Tibial artery (tissue), 4 donors: ENCODE measurements at regions of chr7 and their contacts with region 1.

Region 1: DNA sequence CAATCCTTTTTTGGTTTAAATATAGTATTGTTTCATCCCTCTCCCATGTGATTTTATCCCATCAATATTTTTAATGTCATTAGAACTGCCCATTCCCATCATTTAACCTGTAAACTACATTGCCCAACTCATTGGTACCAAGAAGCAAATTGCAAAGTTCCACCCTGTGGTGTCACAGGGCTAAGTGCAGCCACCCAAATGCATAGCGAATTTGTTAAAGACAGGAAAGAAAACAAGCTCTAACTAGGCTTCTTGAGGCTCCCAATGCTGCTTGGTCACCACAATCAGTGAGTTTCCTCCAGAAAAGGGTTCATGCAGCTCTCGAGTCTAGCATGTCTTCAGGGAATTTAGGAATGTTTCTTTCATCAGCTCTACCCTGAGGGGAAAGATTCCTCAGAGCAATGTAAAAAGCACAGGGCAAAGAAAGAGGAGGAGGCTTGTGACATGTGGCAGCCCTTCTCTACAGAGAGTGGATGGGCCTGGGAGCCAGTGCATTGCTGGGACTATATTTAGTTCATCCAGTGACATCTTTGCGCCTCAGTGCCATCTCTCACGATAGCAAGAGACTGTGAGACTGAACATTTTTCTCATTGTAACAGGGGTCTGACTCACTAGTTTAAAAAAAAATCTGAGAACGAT is 58.1 kb downstream of the CAV1 start:
- DNase-seq: peak; percentile 42 to 73
- H3K4me3 ChIP-seq: peak overlapping the region; percentile 0 to 20
- H3K27ac ChIP-seq: peak overlapping the region; percentile 69 to 73
- H3K4me1 ChIP-seq: peaks cover 0 to 43% (median 20%) of the 10 kb centered on the region in 4 donors
- H3K27me3 ChIP-seq: no peaks in the 10 kb centered on the region
- CTCF ChIP-seq: no peak

Region 2: GRCh38 chr7:116150588-116150987 is 432.3 kb before region 1 on chr7:
- intact Hi-C with region 1: no loop called
- DNase-seq: no peak
- H3K4me3 ChIP-seq: no peak overlapping the region
- H3K27ac ChIP-seq: no peak overlapping the region
- H3K4me1 ChIP-seq: no peaks in the 10 kb centered on the region
- H3K27me3 ChIP-seq: no peaks in the 10 kb centered on the region
- CTCF ChIP-seq: no peak

Region 3: DNA sequence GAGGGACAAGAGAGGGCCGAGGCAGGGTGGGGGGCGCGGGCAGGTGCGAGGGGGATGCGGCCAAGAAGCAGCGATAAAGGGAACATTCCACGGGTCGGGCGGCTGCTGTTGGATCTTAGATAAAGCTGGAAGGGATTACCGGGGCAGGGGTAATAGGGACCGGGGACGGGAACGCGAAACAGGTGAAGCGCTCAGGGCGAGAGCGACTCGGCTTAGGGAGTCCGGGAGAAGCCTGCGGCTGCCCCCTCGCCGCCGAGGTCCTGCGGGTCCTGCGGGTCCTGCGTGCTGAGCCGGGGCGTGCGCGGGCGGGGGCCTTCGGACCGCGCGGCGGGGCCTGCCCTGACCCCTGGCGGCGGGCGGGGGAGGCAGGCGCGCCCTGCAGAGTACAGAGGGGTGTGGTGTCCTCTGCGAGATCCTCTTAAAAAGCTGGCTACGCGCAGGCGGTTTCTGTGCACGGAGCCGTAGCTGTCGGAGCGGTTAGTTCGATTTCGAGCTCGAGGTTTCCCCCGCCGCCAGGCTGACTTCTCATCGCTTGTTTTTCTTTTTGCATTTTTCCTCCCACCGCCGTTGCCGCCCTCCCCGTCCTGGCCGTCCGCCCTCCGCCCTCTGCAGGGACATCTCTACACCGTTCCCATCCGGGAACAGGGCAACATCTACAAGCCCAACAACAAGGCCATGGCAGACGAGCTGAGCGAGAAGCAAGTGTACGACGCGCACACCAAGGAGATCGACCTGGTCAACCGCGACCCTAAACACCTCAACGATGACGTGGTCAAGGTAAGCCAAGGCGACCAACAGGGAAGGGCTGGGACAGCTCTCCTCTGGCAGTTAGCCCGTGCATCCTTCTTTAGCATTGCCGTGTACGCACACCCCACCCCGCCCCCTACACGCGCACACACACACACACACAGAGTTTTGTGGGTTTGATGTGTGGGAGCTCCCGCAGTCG is 56.7 kb before region 1 on chr7:
- intact Hi-C with region 1: loop called (anchors 5 kb)
- DNase-seq: peak; percentile 78 to 92
- H3K4me3 ChIP-seq: peak overlapping the region; percentile 76 to 90
- H3K27ac ChIP-seq: peak overlapping the region; percentile 93 to 99
- H3K4me1 ChIP-seq: peaks cover 0 to 52% (median 11%) of the 10 kb centered on the region in 4 donors
- H3K27me3 ChIP-seq: no peaks in the 10 kb centered on the region
- CTCF ChIP-seq: peak; percentile 83 to 90

Region 4: GRCh38 chr7:116665332-116665996 is 82.5 kb after region 1 on chr7:
- intact Hi-C with region 1: no loop called
- DNase-seq: no peak
- H3K4me3 ChIP-seq: no peak overlapping the region
- H3K27ac ChIP-seq: no peak overlapping the region
- H3K4me1 ChIP-seq: no peaks in the 10 kb centered on the region
- H3K27me3 ChIP-seq: no peaks in the 10 kb centered on the region
- CTCF ChIP-seq: no peak